Activated T-helper 2 cell treated with anti-CD3 and anti-CD28 coated beads, Interferon-gamma antibody, Interleukin-2, Interleukin-4, amounts not matched to agents 10 μg/mL and 5 μg/mL and 100 μg/mL, durations not matched to agents 14 hours and 24 hours and 36 hours (primary cell): ENCODE measurements at regions of chr19 and their contacts with region 1.

Region 1: DNA sequence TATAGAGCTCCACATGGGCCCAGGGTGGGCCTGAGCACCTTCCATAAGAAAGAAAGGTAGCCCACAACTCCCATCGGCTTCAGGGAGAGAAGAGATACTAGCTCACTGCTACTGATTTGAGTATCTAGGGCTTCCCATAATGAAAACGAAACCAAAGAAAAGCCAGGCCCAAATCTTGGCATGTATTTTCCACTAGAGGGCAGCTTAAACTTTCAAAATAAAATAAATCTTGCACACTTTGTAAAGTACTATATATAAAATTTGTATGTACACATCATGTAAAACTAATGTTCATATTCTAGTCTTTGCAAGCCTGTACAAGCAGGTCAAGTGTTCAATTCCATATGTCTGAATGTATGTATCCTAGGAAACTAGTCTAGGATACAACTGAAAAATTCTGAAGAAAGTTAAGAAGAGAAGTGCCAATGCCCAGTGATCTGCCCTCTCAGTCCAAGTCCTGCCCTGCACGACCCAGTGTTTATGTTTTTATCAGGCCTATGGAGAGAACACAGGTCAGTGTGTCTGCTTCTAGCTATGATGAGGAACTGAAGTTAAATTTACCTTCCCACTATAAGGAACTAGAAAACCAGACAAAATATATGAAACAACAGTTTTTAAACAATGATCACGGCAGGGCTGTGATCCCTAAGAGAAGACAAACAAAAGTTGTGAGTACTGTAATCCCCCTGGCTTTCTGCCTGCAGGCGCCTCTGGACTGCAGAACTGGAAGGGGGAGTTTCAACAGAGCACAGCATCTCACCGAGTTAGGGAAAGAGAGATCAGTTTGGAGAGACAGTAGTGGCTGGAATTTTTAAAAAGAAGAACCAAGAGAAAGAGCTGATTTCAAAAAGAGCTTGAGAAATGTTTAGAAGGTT is 475.7 kb downstream of the UQCRFS1 start:
- DNase-seq: no peak
- H3K4me3 Mint-ChIP-seq: no peak overlapping the region
- H3K27ac Mint-ChIP-seq: no peak overlapping the region
- H3K4me1 Mint-ChIP-seq: no peaks in the 10 kb centered on the region
- H3K27me3 Mint-ChIP-seq: no peaks in the 10 kb centered on the region

Region 2: GRCh38 chr19:28051047-28051446 is 686.2 kb before region 1 on chr19:
- intact Hi-C with region 1: no loop called
- DNase-seq: no peak
- H3K4me3 Mint-ChIP-seq: no peak overlapping the region
- H3K27ac Mint-ChIP-seq: no peak overlapping the region
- H3K4me1 Mint-ChIP-seq: no peaks in the 10 kb centered on the region
- H3K27me3 Mint-ChIP-seq: no peaks in the 10 kb centered on the region

Region 3: GRCh38 chr19:28710278-28710677 is 27.0 kb before region 1 on chr19:
- intact Hi-C with region 1: no loop called
- DNase-seq: no peak
- H3K4me3 Mint-ChIP-seq: no peak overlapping the region
- H3K27ac Mint-ChIP-seq: no peak overlapping the region
- H3K4me1 Mint-ChIP-seq: no peaks in the 10 kb centered on the region
- H3K27me3 Mint-ChIP-seq: no peaks in the 10 kb centered on the region

Region 4: GRCh38 chr19:28878862-28879566 is 141.8 kb after region 1 on chr19:
- intact Hi-C with region 1: loop called (anchors 1 kb)
- DNase-seq: peak; percentile 19
- H3K4me3 Mint-ChIP-seq: no peak overlapping the region
- H3K27ac Mint-ChIP-seq: no peak overlapping the region
- H3K4me1 Mint-ChIP-seq: no peaks in the 10 kb centered on the region
- H3K27me3 Mint-ChIP-seq: peaks cover 2% of the 10 kb centered on the region

Region 5: DNA sequence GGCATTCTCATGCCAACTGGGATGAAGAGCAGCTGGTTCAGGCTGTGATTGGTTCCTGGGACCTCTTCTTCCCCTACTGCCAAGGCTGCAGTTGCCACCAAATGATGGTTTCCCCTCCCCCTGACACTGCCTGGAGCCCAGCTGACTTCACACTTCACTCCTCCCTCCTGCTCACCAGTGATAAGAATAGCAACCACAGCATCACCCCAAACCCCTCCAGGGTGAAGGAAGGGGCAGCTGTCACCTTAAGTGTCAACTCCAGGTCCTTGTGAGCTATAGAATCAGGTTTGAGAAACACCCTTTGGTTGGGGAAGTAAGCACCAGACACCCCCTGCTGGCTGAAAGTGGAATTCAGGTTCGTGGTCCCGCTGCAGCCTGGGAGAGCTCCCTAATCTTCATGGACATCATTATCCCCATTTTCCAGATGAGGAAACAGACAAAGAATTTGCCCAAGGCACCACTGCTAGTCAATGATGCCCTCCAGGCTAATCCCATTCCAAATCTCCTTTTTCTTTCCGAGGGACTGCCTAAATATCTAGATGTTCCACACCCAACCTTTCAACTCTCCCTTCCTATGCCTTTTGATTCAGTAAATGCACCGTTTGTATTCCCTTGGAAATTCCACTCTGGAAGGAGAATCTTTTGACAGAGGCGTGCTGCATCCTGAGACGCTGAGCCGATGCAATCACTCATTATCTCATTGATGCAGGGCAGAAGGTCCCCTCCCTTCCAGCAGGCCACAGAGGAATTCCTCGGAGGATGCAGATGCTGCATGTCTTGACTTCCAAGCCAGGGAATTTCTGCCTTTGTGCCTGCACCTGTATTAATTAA is 526.3 kb after region 1 on chr19:
- intact Hi-C with region 1: loop called (anchors 10 kb)
- DNase-seq: peak; percentile 29
- H3K4me3 Mint-ChIP-seq: no peak overlapping the region
- H3K27ac Mint-ChIP-seq: no peak overlapping the region
- H3K4me1 Mint-ChIP-seq: no peaks in the 10 kb centered on the region
- H3K27me3 Mint-ChIP-seq: no peaks in the 10 kb centered on the region